AG04449 (cell line): ENCODE measurements at regions of chr15 and their contacts with region 1.

Region 1: DNA sequence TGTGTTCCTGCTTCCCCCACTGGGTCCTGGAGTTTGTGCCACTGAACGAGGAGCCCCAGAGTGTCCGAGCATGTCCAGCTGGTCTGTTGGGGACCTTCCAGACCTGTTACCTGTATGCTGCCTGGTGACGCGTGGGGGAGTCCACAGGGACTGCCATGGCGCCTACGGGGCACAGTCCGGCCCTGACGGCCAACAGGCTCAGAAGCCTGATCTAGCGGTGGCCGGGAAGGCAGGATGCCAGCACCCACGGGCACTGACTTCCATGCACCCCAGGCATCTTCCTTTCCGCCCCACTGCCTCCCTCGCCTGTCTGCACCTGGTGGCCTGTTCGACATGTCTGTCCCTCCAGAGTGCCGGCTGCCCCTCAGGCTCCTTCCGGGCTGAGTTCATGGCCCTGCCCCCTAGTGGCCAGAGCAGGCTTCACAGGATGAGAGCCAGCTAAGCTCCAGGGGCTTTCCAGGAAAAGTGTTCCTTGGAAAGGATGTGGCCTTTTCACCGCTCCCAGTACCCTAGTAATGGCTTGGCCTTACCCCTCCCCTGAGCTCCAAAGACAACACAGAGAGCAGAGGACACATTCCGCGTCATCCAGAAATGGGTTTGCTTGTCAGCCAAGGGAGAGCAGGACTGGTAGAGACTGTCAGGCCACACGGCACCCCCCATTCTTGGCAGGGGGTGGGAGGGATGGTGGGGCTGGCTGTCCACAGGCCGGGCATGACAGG is 35.7 kb downstream of the NGRN start:
- DNase-seq: no peak
- H3K4me3 ChIP-seq: no peak overlapping the region; the same call in 1 of the 2 replicates
- CTCF ChIP-seq: peak; percentile 88

Region 2: DNA sequence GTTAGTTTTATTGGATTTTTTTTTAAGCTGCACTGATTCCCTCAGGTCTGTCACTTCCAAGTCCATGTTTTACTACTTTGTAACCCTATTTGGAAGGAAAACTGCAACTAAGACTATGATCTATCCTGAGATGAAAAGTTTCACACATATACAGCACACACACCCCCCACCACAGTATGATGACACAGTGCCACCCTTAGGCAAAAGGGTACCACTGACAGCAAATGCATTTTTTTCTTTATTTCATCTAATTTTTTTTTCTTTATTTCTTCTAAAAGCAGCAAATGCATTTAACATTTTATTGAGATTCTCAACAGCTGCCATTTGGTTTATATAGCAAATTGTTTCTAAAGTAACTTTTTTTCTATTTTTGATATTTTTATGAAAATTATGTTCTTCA is 14.5 kb before region 1 on chr15:
- CTCF ChIA-PET with region 1: interaction called, 16 read pairs
- POLR2A ChIA-PET with region 1: no interaction called
- DNase-seq: no peak
- H3K4me3 ChIP-seq: no peak overlapping the region
- CTCF ChIP-seq: peak; percentile 31